Mammary epithelial cell (primary cell): ENCODE measurements at regions of chr3 and their contacts with region 1.

Region 1: DNA sequence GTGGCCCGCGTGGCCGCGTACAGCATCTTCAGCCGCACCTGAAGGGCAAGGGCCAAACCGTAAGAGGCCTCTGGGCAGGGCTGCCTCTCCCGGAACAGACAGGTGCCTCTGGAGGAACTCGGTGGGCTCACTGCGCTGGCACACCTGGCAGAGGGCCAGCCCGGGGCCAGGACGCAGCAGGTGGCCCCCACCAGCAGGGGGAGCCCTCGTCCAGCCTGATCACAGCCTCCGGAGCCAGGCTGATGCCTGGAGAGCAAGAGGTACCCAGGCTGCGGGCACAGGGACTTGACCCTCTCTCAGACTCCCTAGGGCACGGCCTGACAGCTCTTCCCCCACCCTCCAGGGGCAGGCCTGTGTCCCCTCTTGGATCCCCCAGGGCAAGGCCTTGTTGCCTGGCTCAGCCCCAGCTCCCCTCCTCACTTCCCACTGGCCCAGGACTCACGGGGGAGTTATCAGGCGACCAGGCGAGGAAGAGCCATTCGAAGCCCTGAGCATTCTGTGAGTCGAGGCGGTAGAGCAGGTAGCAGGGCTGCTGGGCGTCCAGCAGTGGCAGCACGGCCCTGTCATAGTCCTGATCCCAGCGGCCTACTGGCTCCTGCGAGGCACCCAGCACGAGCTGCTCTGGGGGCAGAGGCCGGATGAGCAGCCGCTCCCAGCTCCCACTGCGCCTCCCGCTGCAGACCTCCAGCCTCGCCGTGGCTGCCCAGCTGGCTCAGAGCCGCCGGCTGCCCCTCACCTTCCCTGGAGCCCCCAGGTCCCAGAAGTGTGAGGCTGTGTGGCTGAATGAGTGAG is 6.3 kb upstream of the TLR9 start:
- DNase-seq: no peak
- H3K4me3 ChIP-seq: no peak overlapping the region
- H3K27ac ChIP-seq: no peak overlapping the region
- H3K4me1 ChIP-seq: peaks cover 5% of the 10 kb centered on the region
- H3K27me3 ChIP-seq: no peaks in the 10 kb centered on the region
- CTCF ChIP-seq: peak; percentile 88 to 98

Region 2: DNA sequence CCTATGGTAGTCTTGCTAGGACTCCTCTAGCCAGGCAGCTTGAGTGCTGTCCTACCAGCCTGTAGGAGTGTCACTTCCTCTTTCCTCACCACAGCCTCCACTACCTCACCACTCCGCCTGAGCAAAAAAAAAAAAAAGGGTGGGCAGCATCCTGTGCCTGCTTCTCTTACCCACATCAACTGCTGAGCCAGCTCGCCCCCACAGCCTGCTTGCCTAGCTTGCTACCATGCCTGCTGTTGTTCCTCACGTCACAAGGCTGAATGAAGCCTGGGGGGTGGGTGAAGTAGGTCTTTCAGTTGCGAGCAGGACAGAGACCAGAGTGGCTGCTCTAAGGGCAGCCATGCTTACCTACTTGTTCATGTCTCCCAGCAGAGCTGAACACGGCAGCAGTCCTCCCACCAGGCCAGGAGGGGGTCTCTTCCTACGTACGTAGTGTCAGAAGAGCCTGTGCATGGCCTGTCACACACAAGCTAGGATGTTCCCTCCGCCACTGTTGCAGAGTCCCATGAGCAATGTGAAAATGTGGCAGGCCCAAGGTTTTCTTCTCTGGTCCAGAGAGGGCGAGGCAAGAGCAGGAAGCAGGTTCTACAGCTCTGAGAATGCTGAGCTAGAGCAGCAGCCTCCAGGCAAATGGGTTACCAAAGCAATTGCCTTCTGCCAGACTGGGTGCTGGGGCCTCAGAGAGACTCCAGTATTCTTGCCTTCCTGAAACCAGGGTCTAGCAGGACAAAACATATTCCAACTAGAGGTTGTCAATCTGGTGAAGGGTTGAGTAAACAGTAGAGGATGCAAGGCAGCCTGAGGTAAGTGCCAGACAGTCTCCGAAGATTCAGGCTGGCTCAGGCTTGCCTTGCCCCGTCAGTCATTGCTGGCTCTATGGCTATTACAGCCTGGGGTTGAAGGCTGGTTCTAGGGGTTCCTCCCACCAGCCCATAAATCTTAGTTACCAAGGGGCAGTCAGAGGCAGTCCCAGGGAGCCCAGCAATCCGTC is 21.9 kb after region 1 on chr3:
- CTCF ChIA-PET with region 1: no interaction called
- dilution Hi-C with region 1: no loop called
- in situ Hi-C with region 1: no loop called
- intact Hi-C with region 1: no loop called
- DNase-seq: no peak
- H3K4me3 ChIP-seq: no peak overlapping the region
- H3K27ac ChIP-seq: no peak overlapping the region
- H3K4me1 ChIP-seq: no peaks in the 10 kb centered on the region
- H3K27me3 ChIP-seq: no peaks in the 10 kb centered on the region
- CTCF ChIP-seq: no peak

Region 3: DNA sequence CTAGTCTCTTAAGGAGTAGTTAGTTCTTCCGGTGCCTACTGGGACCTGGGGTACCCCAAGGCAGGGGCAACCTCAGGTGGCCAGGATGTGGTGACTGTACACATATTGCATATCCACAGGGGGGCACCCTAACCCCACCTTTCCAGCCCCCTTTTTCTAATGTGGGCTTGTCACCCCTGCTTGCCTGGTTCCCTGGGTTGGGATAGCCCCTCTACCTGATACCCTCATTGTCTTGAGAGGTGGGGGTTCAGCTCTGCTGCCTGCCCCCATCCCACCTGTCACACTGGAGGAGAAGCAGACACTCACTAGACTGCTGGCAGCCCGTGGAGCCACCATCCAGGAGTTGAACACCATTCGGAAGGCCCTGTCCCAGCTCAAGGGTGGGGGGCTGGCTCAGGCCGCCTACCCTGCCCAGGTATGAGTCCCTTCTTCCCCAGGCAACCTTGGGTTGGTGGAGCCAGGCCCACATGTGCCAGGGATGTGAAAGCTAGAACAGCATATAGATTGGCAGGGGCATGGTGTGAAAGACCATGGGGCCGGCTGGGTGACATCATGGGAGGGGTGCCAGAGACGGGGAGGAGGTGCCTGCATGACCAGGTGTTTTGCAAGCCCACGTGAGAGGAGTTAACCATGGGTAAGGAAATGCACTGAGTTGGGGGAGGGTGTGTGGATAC is 59.9 kb after region 1 on chr3:
- CTCF ChIA-PET with region 1: no interaction called
- dilution Hi-C with region 1: no loop called
- in situ Hi-C with region 1: loop called in 1 of 2 experiments (anchors 5 kb)
- intact Hi-C with region 1: no loop called
- DNase-seq: no peak
- H3K4me3 ChIP-seq: no peak overlapping the region
- H3K27ac ChIP-seq: no peak overlapping the region
- H3K4me1 ChIP-seq: peaks cover 4% of the 10 kb centered on the region
- H3K27me3 ChIP-seq: no peaks in the 10 kb centered on the region
- CTCF ChIP-seq: peak in 1 of 2 donors; percentile 54

Region 4: GRCh38 chr3:52318186-52318816 is 86.6 kb after region 1 on chr3:
- CTCF ChIA-PET with region 1: no interaction called
- dilution Hi-C with region 1: no loop called
- in situ Hi-C with region 1: no loop called
- intact Hi-C with region 1: no loop called
- DNase-seq: no peak
- H3K4me3 ChIP-seq: no peak overlapping the region
- H3K27ac ChIP-seq: no peak overlapping the region
- H3K4me1 ChIP-seq: peaks cover 17% of the 10 kb centered on the region
- H3K27me3 ChIP-seq: no peaks in the 10 kb centered on the region
- CTCF ChIP-seq: no peak

Region 5: GRCh38 chr3:52471371-52472238 is 239.9 kb after region 1 on chr3:
- CTCF ChIA-PET with region 1: no interaction called
- dilution Hi-C with region 1: no loop called
- in situ Hi-C with region 1: no loop called
- intact Hi-C with region 1: no loop called
- DNase-seq: no peak
- H3K4me3 ChIP-seq: no peak overlapping the region
- H3K27ac ChIP-seq: no peak overlapping the region
- H3K4me1 ChIP-seq: peaks cover 16% of the 10 kb centered on the region
- H3K27me3 ChIP-seq: no peaks in the 10 kb centered on the region
- CTCF ChIP-seq: peak; percentile 65 to 70

Region 6: DNA sequence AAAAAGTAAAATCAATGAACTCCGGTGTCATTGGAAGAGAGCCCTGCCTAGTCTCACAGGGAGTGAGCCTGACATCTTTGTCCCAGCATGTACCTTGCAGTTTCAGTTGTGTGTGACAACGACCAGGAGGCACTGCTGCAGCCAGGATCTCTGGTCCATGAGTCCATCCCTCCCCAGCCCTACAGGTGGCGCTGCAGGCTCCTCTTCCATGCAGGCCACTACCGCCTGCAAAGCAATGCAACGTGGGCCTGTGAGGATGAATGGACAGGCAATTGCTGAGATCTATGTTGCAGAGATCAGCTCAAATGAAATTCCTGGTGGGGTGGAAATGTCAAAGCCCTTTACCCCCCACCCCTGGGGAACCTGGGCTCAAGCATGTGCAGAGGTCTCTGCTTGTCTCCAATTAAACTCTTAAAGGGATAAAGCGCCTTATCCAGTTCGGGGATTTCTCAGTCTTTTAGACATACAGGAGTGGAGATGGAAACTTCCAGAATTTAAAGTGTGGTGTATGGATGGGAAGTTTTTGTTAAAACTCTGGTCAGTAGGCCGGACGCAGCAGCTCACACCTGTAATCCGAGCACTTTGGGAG is 988.3 kb after region 1 on chr3:
- CTCF ChIA-PET with region 1: no interaction called
- dilution Hi-C with region 1: no loop called
- in situ Hi-C with region 1: no loop called
- intact Hi-C with region 1: no loop called
- DNase-seq: peak; percentile 63
- H3K4me3 ChIP-seq: no peak overlapping the region
- H3K27ac ChIP-seq: no peak overlapping the region
- H3K4me1 ChIP-seq: no peaks in the 10 kb centered on the region
- H3K27me3 ChIP-seq: no peaks in the 10 kb centered on the region
- CTCF ChIP-seq: peak; percentile 96 to 97